Lower lobe of right lung (tissue), 2 donors: ENCODE measurements at regions of chr21 and their contacts with region 1.

Region 1: DNA sequence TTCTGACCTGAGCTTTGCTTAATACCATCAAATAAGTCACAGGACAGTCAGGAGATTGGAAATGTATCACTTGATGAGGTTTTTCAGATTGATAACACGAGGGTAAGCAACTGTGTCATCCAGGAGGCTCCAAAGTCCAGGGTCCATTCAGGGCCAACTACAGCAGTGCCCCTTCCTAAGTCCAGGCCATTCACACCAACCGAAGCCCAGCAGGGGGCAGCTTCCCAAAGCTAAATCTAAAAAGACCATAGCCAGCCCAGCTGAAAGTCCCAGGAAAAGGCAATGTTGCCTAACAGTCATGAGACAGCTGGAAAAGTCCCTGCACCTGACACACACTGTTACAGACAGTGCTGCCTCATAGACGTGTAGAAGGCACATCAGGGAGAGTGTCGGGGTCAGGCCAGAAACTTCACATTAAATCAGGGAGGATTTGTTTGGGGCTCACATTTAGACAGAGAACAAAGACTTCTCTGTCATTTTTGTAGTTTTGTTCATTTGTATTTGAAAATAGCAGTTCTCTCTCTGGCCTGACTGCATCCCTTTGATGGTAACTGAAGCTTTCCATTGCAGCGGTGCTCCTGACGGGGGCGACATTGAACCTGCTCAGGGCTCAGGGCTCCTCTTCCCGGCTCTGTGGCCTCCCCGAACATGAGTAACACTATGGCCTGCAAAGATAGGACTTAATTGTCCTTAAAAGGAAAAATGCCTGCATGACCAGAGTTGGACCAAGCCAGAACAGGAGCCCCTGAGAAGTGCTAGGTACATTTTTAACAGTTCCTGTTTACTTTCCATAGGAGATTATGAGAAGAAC is 200.4 kb downstream of the NRIP1 start:
- DNase-seq: peak; percentile 68
- ATAC-seq: peak; percentile 89
- H3K4me3 ChIP-seq: no peak overlapping the region
- H3K27ac ChIP-seq: no peak overlapping the region
- H3K4me1 ChIP-seq: peaks cover 19% of the 10 kb centered on the region
- H3K27me3 ChIP-seq: no peaks in the 10 kb centered on the region
- CTCF ChIP-seq: peak; percentile 55

Region 2: DNA sequence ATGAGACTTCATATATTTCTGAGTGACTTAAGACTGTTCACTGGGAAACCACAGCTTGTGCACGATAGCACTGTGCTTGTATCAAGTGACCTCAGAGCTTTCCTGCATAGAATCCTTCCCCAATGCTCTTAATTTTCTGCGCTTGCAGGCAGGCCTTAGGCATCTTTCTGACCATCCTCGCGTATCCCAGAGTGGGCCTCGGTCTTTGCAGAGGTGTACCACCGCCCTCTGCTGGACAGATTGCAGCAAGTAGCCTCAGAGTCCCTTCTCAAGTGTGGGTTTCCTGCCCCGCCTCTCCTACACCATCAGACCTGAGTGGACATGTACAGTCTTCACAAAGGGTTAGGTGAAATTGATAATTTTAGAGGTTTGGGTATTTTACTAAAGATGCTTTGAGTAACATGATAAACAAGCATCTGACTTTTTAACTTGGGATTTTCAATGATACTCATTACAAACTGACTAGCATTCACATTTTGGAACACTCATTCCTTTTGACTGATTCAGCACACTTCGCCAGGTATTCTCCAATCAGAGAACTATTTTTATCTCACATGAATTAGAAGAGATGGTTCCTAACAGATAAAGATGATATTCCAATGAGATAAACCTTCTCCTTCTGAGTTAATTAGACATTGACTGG is 618.8 kb after region 1 on chr21:
- intact Hi-C with region 1: loop called (anchors 10 kb)
- DNase-seq: peak; percentile 87
- ATAC-seq: peak; percentile 96 to 98
- H3K4me3 ChIP-seq: no peak overlapping the region
- H3K27ac ChIP-seq: no peak overlapping the region
- H3K4me1 ChIP-seq: no peaks in the 10 kb centered on the region
- H3K27me3 ChIP-seq: no peaks in the 10 kb centered on the region
- CTCF ChIP-seq: peak; percentile 95